ENCODE measurements at regions of chr2 and their contacts with region 1.

Region 1: GRCh38 chr2:232521959-232522622 is 1.9 kb downstream of the PRSS56 start:
- DNase-seq: no peak
- H3K4me3 ChIP-seq: no peak overlapping the region
- H3K27ac ChIP-seq: no peak overlapping the region
- H3K27me3 ChIP-seq: peaks cover 59% of the 10 kb centered on the region
- CTCF ChIP-seq: peak; percentile 50

Region 2: DNA sequence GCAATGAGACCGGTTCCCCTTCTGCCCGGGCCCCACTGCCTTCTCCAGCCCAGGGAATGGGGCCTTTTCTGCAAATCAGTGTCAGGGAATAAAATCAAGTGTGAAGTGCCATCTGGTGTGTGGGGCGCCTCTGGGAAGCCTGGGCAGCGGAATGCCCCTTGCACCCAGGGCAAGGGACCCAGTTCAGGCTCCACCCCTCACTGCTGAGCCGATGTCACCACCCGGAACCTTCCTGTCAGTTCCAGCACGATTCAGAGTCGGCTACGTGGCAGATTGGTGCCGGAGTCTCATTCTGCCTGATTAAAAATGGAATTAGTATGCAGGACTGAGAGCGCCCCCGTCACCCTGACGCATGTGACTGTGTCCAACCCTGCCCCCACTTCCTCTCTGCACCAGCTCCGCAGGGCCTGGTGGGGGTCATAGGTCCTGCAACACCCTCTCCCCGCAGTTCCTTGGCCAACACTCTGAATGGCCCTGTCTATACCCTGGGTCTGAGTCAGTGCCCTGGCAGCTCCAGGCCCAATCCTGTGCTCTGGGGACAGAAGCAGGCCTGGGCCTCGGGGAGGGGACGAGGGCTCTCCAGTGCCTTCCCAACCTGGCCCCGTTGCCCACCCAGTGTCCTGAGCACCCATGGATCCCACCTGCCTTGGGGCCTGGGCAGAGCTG is 74.3 kb before region 1 on chr2:
- CTCF ChIA-PET with region 1: interaction called, 12 read pairs
- POLR2A ChIA-PET with region 1: no interaction called
- DNase-seq: no peak
- H3K4me3 ChIP-seq: no peak overlapping the region
- H3K27ac ChIP-seq: no peak overlapping the region
- H3K27me3 ChIP-seq: peaks cover 9% of the 10 kb centered on the region
- CTCF ChIP-seq: no peak

Measured in AG04450 (cell line).